Mammary epithelial cell (primary cell): ENCODE measurements at regions of chr20 and their contacts with region 1.

Region 1: GRCh38 chr20:44324343-44324742 is 12.5 kb upstream of the R3HDML start:
- DNase-seq: peak; percentile 27
- H3K4me3 ChIP-seq: no peak overlapping the region
- H3K27ac ChIP-seq: no peak overlapping the region
- H3K4me1 ChIP-seq: peaks cover 7% of the 10 kb centered on the region
- H3K27me3 ChIP-seq: no peaks in the 10 kb centered on the region
- CTCF ChIP-seq: no peak

Region 2: DNA sequence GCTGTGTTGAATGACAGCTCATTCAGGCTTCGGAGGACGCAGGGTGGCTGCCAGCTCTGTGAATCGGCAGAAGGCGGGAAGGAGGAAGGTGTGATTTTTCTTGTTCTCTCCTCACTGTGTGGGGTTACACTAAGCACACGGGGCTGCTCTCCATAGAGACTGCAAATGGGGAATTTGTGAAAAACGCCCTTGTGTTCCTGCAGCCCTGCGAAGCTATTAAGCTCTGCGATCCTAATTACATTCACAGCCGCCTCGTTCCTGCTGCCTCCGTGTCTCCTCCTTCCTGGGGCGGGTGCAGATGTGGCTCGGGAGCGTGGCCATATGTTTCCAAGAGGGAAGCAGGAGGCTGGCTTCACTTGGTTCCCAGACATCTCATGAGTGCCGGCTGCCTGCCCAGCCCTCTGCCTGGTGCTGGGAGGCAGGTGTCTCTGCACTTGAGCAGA is 285.6 kb before region 1 on chr20:
- CTCF ChIA-PET with region 1: no interaction called
- dilution Hi-C with region 1: no loop called
- in situ Hi-C with region 1: no loop called
- intact Hi-C with region 1: no loop called
- DNase-seq: no peak
- H3K4me3 ChIP-seq: no peak overlapping the region
- H3K27ac ChIP-seq: no peak overlapping the region
- H3K4me1 ChIP-seq: no peaks in the 10 kb centered on the region
- H3K27me3 ChIP-seq: no peaks in the 10 kb centered on the region
- CTCF ChIP-seq: no peak

Region 3: GRCh38 chr20:44089987-44090674 is 234.2 kb before region 1 on chr20:
- CTCF ChIA-PET with region 1: no interaction called
- dilution Hi-C with region 1: no loop called
- in situ Hi-C with region 1: no loop called
- intact Hi-C with region 1: no loop called
- DNase-seq: peak; percentile 89
- H3K4me3 ChIP-seq: no peak overlapping the region
- H3K27ac ChIP-seq: peak overlapping the region; percentile 39
- H3K4me1 ChIP-seq: peaks cover 24% of the 10 kb centered on the region
- H3K27me3 ChIP-seq: no peaks in the 10 kb centered on the region
- CTCF ChIP-seq: no peak

Region 4: DNA sequence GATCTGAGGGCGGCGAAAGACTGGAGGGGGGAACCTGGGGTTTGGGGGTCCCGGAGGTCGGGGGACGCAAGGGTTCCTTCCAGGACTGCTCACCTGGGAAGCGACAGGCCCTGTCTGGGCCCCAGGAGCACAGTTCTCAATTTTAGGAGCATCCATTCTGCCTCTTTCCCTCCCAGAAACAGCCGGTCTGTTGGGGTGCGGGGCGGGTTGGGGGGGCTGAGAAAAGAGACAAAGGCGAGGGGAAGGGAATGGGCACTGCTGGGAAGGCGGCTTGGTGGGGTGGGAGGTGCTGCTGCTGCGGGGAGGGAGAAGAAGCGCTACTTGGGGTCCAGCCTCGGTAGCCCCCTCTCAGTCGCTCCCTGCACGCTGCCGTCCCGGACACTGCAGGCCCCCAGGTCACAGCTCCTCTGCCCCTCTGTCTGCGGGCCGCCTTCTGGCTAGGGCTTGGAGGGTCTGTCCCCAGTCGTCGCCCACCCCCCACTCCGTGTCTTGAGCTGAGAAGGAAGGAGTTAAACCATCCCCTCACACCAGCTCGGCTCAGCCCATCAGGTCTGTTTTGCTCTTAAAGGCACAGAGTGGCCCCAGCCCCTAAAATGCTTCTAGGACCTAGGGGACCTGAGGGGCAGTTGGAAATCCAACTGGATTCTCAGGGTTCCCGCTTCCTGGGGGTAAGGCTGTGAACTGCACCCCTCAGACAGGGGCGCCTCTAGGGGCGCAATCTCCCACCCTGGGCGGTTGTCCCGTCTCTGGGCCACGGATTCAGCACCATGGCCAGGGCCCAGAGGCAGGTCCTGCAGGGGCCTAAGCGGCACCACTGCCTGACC is 76.5 kb before region 1 on chr20:
- CTCF ChIA-PET with region 1: no interaction called
- dilution Hi-C with region 1: loop called (anchors 5 kb)
- in situ Hi-C with region 1: no loop called
- intact Hi-C with region 1: no loop called
- DNase-seq: peak; percentile 5
- H3K4me3 ChIP-seq: no peak overlapping the region
- H3K27ac ChIP-seq: no peak overlapping the region
- H3K4me1 ChIP-seq: no peaks in the 10 kb centered on the region
- H3K27me3 ChIP-seq: peaks cover 13% of the 10 kb centered on the region
- CTCF ChIP-seq: peak; percentile 16 to 25

Region 5: DNA sequence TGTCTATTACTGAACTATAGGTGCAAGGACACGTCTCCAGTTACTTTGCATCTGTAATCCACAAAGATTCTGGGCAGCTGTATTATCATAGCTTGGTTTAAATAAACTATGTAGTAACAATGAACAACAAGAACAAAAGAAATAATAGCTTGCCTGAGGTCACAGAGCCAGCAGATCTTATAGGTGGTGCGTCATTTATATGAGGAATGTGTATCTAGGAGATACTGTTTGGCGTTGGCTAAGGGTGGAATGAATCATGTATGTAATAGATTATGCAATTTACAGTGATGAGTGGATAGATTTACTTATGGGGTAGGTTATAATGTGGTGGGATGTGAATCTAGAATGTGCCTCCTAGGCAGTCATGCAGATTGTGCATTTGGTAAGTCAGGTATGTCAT is 74.0 kb after region 1 on chr20:
- CTCF ChIA-PET with region 1: no interaction called
- dilution Hi-C with region 1: loop called (anchors 5 kb)
- in situ Hi-C with region 1: no loop called
- intact Hi-C with region 1: no loop called
- DNase-seq: peak; percentile 89
- H3K4me3 ChIP-seq: no peak overlapping the region
- H3K27ac ChIP-seq: peak overlapping the region; percentile 38
- H3K4me1 ChIP-seq: peaks cover 13% of the 10 kb centered on the region
- H3K27me3 ChIP-seq: no peaks in the 10 kb centered on the region
- CTCF ChIP-seq: no peak

Region 6: DNA sequence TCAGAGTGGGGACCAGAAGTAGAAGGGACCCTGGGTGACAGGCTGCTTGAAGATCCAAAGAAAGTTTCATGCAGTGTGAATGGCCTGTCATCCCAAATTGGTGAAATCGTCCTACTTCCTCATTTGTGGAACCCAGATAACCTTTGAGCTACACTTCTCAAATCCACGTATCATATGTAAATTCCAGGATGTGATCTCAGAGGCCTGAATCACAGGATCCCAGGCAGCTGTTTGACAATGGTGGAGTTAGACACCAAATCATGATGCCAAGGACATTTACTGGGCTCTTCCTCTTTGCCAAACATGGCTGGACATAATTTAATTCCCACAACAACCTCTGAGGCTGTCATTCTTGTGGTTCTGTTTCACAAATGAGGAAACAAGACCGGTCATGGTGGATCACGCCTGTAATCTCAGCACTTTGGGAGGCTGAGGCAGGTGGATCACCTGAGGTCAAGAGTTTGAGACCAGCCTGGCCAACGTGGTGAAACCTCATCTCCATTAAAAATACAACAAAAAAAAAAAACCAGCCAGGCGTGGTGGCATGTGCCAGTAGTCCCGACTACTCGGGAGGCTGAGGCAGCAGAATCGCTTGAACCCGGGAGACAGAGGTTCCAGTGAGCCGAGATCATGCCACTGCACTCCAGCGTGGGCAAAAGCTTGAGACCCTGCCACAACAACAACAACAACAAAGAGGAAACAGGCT is 111.4 kb after region 1 on chr20:
- CTCF ChIA-PET with region 1: no interaction called
- dilution Hi-C with region 1: loop called (anchors 5 kb)
- in situ Hi-C with region 1: no loop called
- intact Hi-C with region 1: no loop called
- DNase-seq: no peak
- H3K4me3 ChIP-seq: no peak overlapping the region
- H3K27ac ChIP-seq: no peak overlapping the region
- H3K4me1 ChIP-seq: no peaks in the 10 kb centered on the region
- H3K27me3 ChIP-seq: no peaks in the 10 kb centered on the region
- CTCF ChIP-seq: no peak

Region 7: DNA sequence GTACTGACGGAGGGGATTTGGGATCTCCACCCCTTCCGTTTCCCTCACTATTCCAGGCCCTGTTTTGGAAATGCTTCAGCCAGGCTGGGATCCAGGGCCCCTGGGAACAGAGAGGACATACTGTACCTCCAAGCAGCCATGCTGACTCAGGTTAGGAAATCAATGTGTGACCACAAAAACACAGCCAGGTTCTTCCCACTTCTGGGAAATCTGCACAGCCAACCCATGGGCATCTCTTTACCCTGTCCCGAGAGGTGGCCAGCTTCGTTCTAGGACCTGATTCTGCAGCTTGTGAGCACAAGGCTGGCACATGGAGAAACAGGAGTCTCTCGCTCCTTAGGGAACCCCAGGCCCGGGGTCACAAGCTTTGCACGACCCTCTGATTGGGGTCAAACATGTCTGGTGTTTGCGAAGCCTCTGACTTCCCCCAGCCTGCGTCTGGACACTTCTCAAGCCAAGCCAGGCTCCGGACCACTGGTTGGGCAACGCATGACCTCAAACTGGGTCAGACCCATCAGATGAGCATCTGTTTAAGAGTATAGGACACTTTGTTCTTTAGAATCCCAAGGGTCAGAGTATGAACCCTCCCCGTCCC is 143.0 kb after region 1 on chr20:
- CTCF ChIA-PET with region 1: no interaction called
- dilution Hi-C with region 1: loop called (anchors 5 kb)
- in situ Hi-C with region 1: no loop called
- intact Hi-C with region 1: no loop called
- DNase-seq: peak; percentile 63
- H3K4me3 ChIP-seq: no peak overlapping the region
- H3K27ac ChIP-seq: no peak overlapping the region
- H3K4me1 ChIP-seq: peaks cover 24% of the 10 kb centered on the region
- H3K27me3 ChIP-seq: no peaks in the 10 kb centered on the region
- CTCF ChIP-seq: no peak

Region 8: GRCh38 chr20:44521484-44522481 is 197.4 kb after region 1 on chr20 and contains the start of gene SERINC3:
- CTCF ChIA-PET with region 1: no interaction called
- dilution Hi-C with region 1: no loop called
- in situ Hi-C with region 1: no loop called
- intact Hi-C with region 1: no loop called
- DNase-seq: peak; percentile 96
- H3K4me3 ChIP-seq: peak within 1 kb of the TSS; percentile 95 to 99 (median 99)
- H3K27ac ChIP-seq: peak within 1 kb of the TSS; percentile 99
- H3K4me1 ChIP-seq: peaks cover 32% of the 10 kb centered on the region
- H3K27me3 ChIP-seq: no peaks in the 10 kb centered on the region
- CTCF ChIP-seq: peak in 1 of 2 donors; percentile 33
- total RNA-seq, gene SERINC3: 101 to 153 TPM

Region 9: DNA sequence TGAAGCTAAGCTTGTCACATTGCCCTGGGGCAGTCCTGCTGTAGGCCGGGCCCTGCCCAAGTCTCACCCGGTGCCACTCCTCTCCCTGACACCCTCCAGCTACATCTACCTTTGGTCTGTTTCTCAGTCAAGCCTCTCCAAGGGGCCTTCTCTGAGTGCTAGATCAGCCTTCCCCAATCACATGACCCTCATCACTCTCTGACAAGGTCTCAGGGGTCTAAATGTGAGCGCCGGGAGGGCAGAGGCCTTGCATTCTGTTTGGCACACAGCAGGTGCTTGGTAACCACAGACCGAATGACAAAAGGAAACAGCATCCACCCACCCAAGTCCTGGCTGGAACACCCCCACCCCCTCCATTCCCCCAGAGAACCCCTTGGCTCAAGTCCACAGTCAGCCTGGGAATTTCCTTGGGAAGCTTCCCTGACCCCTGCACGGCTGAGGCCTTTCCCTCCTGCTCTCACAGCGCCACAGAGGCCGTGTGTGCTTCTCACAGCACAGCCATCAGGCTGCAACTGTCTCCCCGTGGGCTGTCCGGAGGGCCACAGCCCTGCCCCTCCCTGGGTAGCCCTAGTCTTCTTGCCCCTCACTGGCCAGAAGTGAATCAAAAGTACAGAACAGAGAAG is 290.9 kb after region 1 on chr20:
- CTCF ChIA-PET with region 1: no interaction called
- dilution Hi-C with region 1: loop called (anchors 5 kb)
- in situ Hi-C with region 1: no loop called
- intact Hi-C with region 1: no loop called
- DNase-seq: no peak
- H3K4me3 ChIP-seq: no peak overlapping the region
- H3K27ac ChIP-seq: no peak overlapping the region
- H3K4me1 ChIP-seq: peaks cover 12% of the 10 kb centered on the region
- H3K27me3 ChIP-seq: no peaks in the 10 kb centered on the region
- CTCF ChIP-seq: no peak